ENCODE measurements at regions of chr19 and their contacts with region 1.

Region 1: GRCh38 chr19:45092747-45093678 is at the start of gene PPP1R37:
- DNase-seq: peak; percentile 96
- H3K4me3 ChIP-seq: peak within 1 kb of the TSS; percentile 84 to 99 (median 90)
- H3K27ac ChIP-seq: peak within 1 kb of the TSS; percentile 84 to 90 (median 86)
- H3K4me1 ChIP-seq: peaks cover 0 to 67% (median 57%) of the 10 kb centered on the region in 4 donors
- H3K27me3 ChIP-seq: no peaks in the 10 kb centered on the region
- CTCF ChIP-seq: peak in 3 of 4 experiments; percentile 36 to 48 (median 43)
- EP300 ChIP-seq: peak in 1 of 4 donors; percentile 40
- POLR2A ChIP-seq: peak in 1 of 2 donors; percentile 5
- total RNA-seq, gene PPP1R37: 17.8 to 23.2 (median 19.9) TPM

Region 2: DNA sequence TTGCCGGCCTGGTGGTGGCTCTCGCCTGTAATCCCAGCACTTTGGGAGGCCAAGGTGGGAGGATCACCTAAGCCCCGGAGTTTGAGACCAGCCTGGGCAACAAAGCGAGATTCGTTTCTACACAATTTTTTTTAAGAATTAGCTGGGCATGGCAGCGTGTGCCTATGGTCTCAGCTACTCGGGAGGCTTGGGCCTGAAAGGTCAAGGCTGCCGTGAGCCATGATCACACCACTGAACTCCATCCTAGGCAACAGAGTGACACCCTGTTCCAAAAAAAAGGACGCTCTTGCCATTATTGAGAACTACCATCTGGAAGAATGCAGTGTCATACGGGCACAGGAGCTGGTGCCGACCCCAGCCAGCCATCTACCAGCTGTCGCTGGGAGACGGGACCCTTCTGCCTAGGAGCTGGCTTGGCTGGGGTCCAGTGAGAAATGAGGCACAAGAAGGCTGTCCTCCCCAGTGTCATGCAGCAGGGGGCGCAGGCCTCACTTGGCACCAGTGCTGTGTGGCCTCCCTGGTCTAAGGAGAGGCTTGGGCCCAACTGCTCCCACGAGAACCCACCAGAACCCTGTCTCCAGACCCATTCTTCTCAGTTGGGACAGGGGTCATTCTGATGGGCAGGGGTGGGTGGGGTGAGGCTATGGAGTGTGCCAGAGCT is 104.0 kb before region 1 on chr19:
- intact Hi-C with region 1: no loop called
- DNase-seq: peak; percentile 86
- H3K4me3 ChIP-seq: no peak overlapping the region
- H3K27ac ChIP-seq: no peak overlapping the region
- H3K4me1 ChIP-seq: peaks cover 0 to 2% (median 0%) of the 10 kb centered on the region in 4 donors
- H3K27me3 ChIP-seq: no peaks in the 10 kb centered on the region
- CTCF ChIP-seq: peak in 3 of 4 experiments; percentile 38 to 43 (median 41)
- EP300 ChIP-seq: no peak
- POLR2A ChIP-seq: no peak

Region 3: GRCh38 chr19:45178262-45179071 is 85.5 kb after region 1 on chr19 and contains the start of gene BLOC1S3:
- intact Hi-C with region 1: loop called (anchors 5 kb)
- DNase-seq: peak; percentile 100
- H3K4me3 ChIP-seq: peak within 1 kb of the TSS; percentile 75 to 89 (median 86)
- H3K27ac ChIP-seq: peak within 1 kb of the TSS; percentile 94 to 98 (median 95)
- H3K4me1 ChIP-seq: peaks cover 0 to 38% (median 30%) of the 10 kb centered on the region in 4 donors
- H3K27me3 ChIP-seq: no peaks in the 10 kb centered on the region
- CTCF ChIP-seq: no peak
- EP300 ChIP-seq: peak in 1 of 4 donors; percentile 70
- POLR2A ChIP-seq: peak; percentile 82 to 83
- total RNA-seq, gene BLOC1S3: 6.1 to 10.9 (median 7.8) TPM

Measured in sigmoid colon (tissue), 7 donors.